ENCODE measurements at regions of chr20 and their contacts with region 1.

Region 1: GRCh38 chr20:49610701-49611538 is 43.0 kb upstream of the PTGIS start:
- DNase-seq: peak; percentile 81 to 89 (median 84)
- H3K4me3 ChIP-seq: peak overlapping the region; percentile 8 to 66 (median 30)
- H3K27ac ChIP-seq: no peak overlapping the region
- H3K4me1 ChIP-seq: peaks cover 0 to 12% (median 10%) of the 10 kb centered on the region in 4 experiments
- H3K27me3 ChIP-seq: peaks cover 0 to 13% (median 4%) of the 10 kb centered on the region in 5 experiments

Region 2: GRCh38 chr20:49484180-49485140 is 126.5 kb before region 1 on chr20:
- CTCF ChIA-PET with region 1: no interaction called
- POLR2A ChIA-PET with region 1: no interaction called
- DNase-seq: peak; percentile 67 to 74 (median 73)
- H3K4me3 ChIP-seq: peak overlapping the region in 1 of 7 experiments; percentile 58
- H3K27ac ChIP-seq: no peak overlapping the region
- H3K4me1 ChIP-seq: peaks cover 0 to 16% (median 9%) of the 10 kb centered on the region in 4 experiments
- H3K27me3 ChIP-seq: peaks cover 3 to 95% (median 25%) of the 10 kb centered on the region in 5 experiments

Region 3: GRCh38 chr20:49508435-49509199 is 102.3 kb before region 1 on chr20:
- CTCF ChIA-PET with region 1: interaction called, 10 read pairs
- POLR2A ChIA-PET with region 1: no interaction called
- DNase-seq: peak; percentile 57 to 79 (median 69)
- H3K4me3 ChIP-seq: no peak overlapping the region
- H3K27ac ChIP-seq: no peak overlapping the region
- H3K4me1 ChIP-seq: peaks cover 0 to 6% (median 4%) of the 10 kb centered on the region in 4 experiments
- H3K27me3 ChIP-seq: peaks cover 0 to 45% (median 14%) of the 10 kb centered on the region in 5 experiments

Region 4: DNA sequence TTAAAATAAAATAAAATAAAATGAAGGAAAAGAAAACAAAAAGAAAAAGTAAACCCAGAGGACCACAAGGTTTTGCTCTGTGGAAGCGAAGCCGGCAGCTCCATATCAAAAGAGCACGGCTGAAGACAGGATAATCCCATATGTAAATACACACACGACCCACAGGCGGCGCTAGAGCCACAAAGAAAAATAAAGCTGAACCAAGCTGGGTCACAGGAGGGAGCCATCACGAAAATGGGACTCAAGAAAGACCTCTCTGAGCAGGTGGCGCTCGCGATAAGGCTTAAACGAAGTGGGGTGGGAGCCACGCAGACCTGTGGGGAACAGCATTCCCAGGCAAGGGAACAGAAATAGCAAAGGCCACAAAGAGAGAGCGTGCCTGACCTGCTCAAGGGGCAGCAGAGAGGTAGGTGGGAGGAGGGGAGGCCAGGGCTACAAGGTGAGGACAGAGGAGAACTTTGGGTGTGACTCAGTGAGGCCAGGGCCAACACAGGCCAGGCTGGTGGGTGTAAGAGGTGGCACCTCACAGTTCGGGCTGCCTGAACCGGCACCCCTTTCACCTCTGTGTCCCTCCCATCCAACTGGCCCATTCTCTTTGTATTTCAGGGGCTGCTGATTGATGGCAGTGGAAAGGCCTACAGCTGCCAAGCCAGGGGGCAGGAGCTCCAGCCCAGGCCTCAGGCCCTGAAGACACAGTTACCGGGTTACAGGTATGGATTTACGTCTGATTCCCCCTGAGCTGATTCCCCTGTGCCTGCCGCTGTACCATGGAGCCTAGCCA is 69.0 kb before region 1 on chr20:
- CTCF ChIA-PET with region 1: interaction called, 155 read pairs
- POLR2A ChIA-PET with region 1: no interaction called
- DNase-seq: peak; percentile 72 to 82 (median 75)
- H3K4me3 ChIP-seq: no peak overlapping the region
- H3K27ac ChIP-seq: no peak overlapping the region
- H3K4me1 ChIP-seq: no peaks in the 10 kb centered on the region
- H3K27me3 ChIP-seq: peaks cover 0 to 12% (median 3%) of the 10 kb centered on the region in 5 experiments

Region 5: DNA sequence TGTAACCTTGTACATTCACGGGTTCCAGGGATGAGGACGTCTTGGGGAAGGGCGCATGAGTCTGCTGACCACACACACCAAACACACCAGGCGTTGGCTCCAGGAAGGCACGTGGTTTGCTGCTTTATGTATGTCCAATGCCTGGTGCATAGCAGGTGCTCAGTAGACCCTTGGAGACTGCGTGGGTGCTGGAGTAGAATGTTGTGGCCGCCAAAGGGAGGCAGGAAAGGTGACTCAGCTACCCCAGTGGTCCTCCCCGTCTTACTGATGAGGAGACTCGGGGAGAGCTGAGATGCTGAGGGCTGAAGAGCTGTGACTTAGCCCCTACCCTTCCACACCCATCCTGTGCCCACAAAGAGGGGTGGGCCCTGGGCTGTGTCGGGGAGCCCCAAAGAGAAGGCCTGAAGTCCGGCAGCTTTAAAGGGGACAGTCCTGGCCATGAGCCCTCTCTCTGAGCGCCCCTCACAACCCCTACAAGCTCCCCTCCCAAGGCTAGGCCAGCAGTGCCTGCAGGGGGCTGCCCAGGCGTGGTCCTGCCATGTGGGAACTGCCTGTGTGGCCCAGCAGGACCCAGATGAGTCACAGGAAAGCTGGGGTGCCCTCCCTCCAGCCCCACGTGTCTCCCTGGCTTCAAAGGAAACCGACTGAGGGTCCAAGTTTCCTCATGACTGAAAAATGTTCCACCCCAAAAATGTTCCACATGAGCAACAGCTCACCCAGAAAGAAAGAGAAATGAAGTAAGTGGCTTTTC is 14.9 kb before region 1 on chr20:
- CTCF ChIA-PET with region 1: interaction called, 30 read pairs
- POLR2A ChIA-PET with region 1: no interaction called
- DNase-seq: peak in 2 of 3 donors; percentile 58 to 75
- H3K4me3 ChIP-seq: no peak overlapping the region
- H3K27ac ChIP-seq: no peak overlapping the region
- H3K4me1 ChIP-seq: peaks cover 0 to 15% (median 11%) of the 10 kb centered on the region in 4 experiments
- H3K27me3 ChIP-seq: peaks cover 0 to 4% (median 0%) of the 10 kb centered on the region in 5 experiments

Region 6: GRCh38 chr20:49846206-49846807 is 235.4 kb after region 1 on chr20:
- CTCF ChIA-PET with region 1: interaction called, 138 read pairs
- POLR2A ChIA-PET with region 1: no interaction called
- DNase-seq: peak; percentile 50 to 67 (median 58)
- H3K4me3 ChIP-seq: no peak overlapping the region
- H3K27ac ChIP-seq: no peak overlapping the region
- H3K4me1 ChIP-seq: peaks cover 0 to 1% (median 0%) of the 10 kb centered on the region in 4 experiments
- H3K27me3 ChIP-seq: no peaks in the 10 kb centered on the region

Region 7: GRCh38 chr20:49888345-49888966 is 277.5 kb after region 1 on chr20:
- CTCF ChIA-PET with region 1: interaction called, 21 read pairs
- POLR2A ChIA-PET with region 1: no interaction called
- DNase-seq: peak; percentile 50 to 74 (median 70)
- H3K4me3 ChIP-seq: no peak overlapping the region
- H3K27ac ChIP-seq: no peak overlapping the region
- H3K4me1 ChIP-seq: peaks cover 0 to 34% (median 12%) of the 10 kb centered on the region in 4 experiments
- H3K27me3 ChIP-seq: no peaks in the 10 kb centered on the region